ENCODE measurements at regions of chr1 and their contacts with region 1.

Region 1: DNA sequence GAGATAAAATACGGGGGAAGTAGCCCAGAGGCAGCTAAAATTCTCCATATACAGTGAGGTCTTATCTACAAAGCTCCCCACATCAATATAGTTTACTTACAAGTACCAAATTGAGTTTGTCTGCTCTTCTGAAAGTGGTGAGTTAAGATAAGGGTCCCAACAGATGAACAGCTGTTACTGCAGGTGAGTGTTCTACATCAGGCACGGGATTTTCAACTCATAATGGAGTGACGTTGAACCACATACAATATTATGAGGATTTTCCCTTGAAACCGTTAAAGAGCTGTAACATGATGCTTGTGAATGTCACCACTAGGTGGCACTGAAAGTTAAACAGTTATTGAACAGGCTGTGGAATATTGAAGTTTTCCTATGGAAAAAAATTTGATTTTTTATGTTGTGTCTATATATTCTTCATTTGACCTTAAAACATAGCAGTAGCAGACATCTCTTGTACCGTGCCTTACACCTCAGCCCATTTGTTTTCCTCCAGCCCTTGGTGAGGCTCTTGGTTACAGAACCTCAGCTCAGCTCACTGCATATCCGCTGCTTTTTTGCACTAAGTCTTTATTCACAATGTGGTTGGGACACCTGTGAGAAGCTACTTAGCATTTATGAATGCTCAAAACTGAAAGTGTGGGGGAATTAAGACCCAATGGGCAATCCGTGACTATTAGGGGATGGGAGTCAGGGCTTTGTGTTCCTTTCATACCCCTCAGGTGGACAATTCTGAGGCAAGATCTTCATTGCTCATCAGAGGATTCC is 23.2 kb downstream of the CD1D start:
- DNase-seq: peak; percentile 40 to 57
- H3K4me3 ChIP-seq: no peak overlapping the region
- H3K4me1 ChIP-seq: no peaks in the 10 kb centered on the region
- H3K27me3 ChIP-seq: peaks cover 3% of the 10 kb centered on the region; the same call in 1 of the 2 replicates

Region 2: GRCh38 chr1:158285756-158286241 is 81.9 kb after region 1 on chr1:
- in situ Hi-C with region 1: no loop called
- DNase-seq: no peak
- H3K4me3 ChIP-seq: no peak overlapping the region
- H3K4me1 ChIP-seq: no peaks in the 10 kb centered on the region
- H3K27me3 ChIP-seq: no peaks in the 10 kb centered on the region

Region 3: GRCh38 chr1:159071970-159072582 is 868.2 kb after region 1 on chr1:
- in situ Hi-C with region 1: loop called (anchors 25 kb)
- DNase-seq: peak in 1 of 2 experiments; percentile 59
- H3K4me3 ChIP-seq: no peak overlapping the region
- H3K4me1 ChIP-seq: no peaks in the 10 kb centered on the region
- H3K27me3 ChIP-seq: no peaks in the 10 kb centered on the region

Measured in HAP-1 (cell line).